SK-MEL-5 (cell line): ENCODE measurements at regions of chr12 and their contacts with region 1.

Region 1: GRCh38 chr12:642633-643474 is 20.4 kb downstream of the NINJ2 start:
- DNase-seq: no peak

Region 2: GRCh38 chr12:701896-702539 is 59.2 kb after region 1 on chr12:
- in situ Hi-C with region 1: no loop called
- DNase-seq: no peak

Region 3: DNA sequence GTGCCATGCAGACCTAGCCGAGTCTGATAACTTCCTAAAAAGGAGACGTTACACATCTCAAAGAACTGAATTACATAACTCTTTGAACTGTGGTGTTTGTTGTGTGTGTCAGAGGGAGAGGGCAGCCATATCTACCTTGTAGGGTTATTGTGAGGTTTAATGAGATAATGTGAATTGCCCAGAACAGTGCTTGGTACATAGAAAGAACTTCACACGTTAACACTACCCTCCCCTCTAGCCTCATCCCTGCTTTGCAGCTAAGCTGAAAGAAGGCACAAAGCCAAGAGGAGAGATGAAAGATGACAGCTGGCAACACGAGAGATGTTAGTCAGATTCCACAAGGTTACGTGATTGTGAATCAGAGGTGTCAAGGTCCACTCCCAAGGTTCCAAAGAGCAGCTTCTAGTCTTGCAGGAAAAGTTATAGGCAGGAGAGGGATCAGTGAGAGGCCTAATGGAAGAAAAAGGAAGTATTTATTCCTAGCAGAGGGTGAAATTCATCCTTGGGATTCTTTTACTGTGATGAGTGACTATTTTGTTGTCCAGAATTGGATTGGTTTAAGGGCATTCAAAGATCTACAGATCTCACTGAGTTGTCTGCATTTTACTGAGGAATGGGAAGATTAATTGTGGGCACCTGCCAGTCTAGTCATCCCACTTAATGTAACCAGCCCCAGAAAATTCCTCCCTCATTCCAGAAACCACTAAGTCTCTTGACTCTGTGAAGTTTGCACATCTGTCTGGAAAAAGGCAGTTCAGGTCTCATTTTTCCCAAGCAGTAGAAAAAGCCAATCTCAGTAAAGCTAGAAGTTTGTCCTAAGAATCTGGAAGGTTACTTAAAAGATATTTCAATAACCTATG is 83.7 kb after region 1 on chr12:
- in situ Hi-C with region 1: loop called (anchors 25 kb)
- DNase-seq: no peak